Calu3 (cell line): ENCODE measurements at regions of chr6 and their contacts with region 1.

Region 1: DNA sequence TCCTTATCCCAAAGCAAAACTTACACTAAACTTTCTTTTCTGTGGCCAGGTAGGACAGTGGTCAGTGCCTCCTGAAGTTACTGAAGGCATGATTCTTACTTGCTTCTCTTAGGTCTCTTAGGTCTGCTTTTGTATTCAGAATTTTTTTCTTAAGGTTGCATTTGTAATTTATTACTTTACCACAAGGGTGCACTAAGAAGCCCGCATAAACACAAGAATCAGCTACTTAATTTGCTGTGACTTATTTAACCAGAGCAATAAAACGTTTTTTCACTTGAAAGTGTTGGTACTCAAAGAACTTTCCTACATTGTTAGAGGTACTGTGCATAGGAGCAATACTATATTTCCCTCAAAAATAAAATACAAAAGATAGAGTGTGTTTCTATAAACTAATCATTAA is 75.4 kb upstream of the LAMA2 start:
- DNase-seq: no peak
- H3K4me3 Mint-ChIP-seq: no peak overlapping the region
- H3K27ac Mint-ChIP-seq: no peak overlapping the region
- H3K4me1 Mint-ChIP-seq: no peaks in the 10 kb centered on the region
- H3K27me3 Mint-ChIP-seq: peaks cover 31% of the 10 kb centered on the region
- CTCF ChIP-seq: peak; percentile 46

Region 2: DNA sequence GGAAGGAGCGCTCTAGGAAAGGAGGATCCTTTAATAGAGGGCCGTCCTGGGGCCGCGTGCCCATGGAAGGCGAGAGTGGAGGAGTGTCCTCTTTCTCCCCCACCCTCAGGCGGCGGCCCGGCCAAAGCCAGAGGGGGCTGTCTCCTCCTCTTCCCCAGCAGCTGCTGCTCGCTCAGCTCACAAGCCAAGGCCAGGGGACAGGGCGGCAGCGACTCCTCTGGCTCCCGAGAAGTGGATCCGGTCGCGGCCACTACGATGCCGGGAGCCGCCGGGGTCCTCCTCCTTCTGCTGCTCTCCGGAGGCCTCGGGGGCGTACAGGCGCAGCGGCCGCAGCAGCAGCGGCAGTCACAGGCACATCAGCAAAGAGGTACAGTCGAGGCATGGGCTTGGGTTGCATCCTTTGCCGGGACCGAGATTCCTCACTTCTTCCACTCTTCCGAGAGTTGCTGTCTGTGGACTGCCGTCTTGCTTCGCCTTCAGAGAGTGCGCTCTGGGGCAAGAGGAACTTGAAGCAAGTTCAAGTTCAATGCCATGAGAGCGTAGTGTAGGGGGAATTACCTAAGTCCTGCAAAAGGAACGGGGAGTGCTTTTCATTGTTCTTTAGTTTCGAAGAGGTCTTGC is 75.5 kb after region 1 on chr6 and contains the start of gene LAMA2:
- CTCF ChIA-PET with region 1: no interaction called
- intact Hi-C with region 1: no loop called
- DNase-seq: no peak
- H3K4me3 Mint-ChIP-seq: no peak within 1 kb of the TSS
- H3K27ac Mint-ChIP-seq: no peak within 1 kb of the TSS
- H3K4me1 Mint-ChIP-seq: no peaks in the 10 kb centered on the region
- H3K27me3 Mint-ChIP-seq: no peaks in the 10 kb centered on the region
- CTCF ChIP-seq: no peak
- total RNA-seq, gene LAMA2: 0.66 and 0.80 TPM in 2 replicates

Region 3: DNA sequence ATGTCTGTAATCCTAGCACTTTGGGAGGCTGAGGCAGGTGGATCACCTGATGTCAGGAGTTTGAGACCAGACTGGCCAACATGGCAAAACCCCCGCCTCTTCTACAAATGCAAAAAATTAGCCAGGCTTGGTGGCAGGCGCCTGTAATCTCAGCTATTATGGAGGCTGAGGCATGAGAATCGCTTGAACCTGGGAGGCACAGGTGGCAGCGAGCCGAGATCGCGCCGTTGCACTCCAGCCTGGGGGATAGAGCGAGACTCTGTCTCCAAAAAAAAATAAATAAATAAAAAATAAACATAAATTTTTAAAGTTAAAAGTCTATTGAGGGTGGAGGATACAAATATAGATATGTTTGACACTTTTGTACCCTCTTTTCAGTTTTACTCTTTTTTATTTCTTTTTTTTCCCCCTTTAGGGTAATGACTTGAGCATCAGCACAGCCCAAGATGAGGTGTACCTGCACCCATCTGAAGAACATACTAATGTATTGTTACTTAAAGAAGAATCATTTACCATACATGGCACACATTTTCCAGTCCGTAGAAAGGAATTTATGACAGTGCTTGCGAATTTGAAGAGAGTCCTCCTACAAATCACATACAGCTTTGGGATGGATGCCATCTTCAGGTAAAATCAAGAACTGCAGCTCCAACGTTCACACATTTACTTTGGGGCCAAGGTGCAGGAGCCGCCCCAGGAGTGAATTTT is 444.2 kb after region 1 on chr6:
- CTCF ChIA-PET with region 1: interaction called, 11 read pairs
- intact Hi-C with region 1: loop called (anchors 5 kb)
- DNase-seq: peak; percentile 60
- H3K4me3 Mint-ChIP-seq: no peak overlapping the region
- H3K27ac Mint-ChIP-seq: no peak overlapping the region
- H3K4me1 Mint-ChIP-seq: peaks cover 21% of the 10 kb centered on the region
- H3K27me3 Mint-ChIP-seq: peaks cover 17% of the 10 kb centered on the region
- CTCF ChIP-seq: peak; percentile 77

Region 4: GRCh38 chr6:129370268-129370916 is 562.8 kb after region 1 on chr6:
- CTCF ChIA-PET with region 1: interaction called, 7 read pairs
- intact Hi-C with region 1: loop called (anchors 2 kb)
- DNase-seq: peak; percentile 41
- H3K4me3 Mint-ChIP-seq: no peak overlapping the region
- H3K27ac Mint-ChIP-seq: no peak overlapping the region
- H3K4me1 Mint-ChIP-seq: no peaks in the 10 kb centered on the region
- H3K27me3 Mint-ChIP-seq: no peaks in the 10 kb centered on the region
- CTCF ChIP-seq: peak; percentile 57